ENCODE measurements at regions of chr18 and their contacts with region 1.

Region 1: DNA sequence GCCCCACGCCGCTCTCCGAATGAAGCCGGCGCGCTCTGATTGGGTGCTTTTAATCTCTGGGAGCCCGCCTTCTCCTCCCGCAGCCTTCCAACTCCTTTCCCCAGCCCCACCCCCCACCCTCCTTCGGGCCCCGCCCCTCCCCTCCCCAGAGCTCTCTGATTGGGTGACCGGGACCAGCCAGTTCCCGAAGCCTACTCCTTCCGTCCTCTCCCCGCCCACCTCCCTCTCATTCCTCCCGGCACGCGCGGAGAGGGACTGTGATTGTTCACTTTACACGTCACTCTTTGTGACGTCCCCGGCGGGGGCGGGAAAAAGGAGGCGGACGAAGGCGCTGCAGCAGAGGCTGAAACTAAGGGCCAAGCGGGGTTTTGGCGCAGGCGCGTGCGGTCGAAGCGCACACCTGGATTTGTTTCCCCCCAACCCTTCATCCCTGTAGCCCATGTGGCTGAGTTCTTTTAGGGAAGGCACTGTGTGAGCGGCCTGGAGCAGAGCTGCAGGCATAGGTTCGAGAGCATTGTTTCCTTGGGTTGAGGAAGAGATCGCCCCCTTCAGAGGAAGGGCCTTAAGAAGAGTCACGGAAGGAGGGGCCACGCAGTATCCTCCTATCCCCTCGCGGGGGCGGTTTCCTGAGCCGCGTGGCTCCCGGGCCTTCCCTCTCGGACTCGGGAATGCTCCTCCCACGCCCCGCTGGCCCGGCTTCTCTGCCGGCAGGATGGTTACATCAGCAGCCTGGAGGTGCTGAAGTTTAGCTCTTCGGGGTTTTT is at the start of gene MEX3C:
- DNase-seq: peak; percentile 100
- ATAC-seq: peak; percentile 81
- H3K4me3 ChIP-seq: peak within 1 kb of the TSS; percentile 65 to 94 (median 84)
- H3K4me3 Mint-ChIP-seq: peak within 1 kb of the TSS; percentile 97
- H3K27ac ChIP-seq: peak within 1 kb of the TSS; percentile 74 to 87
- H3K27ac Mint-ChIP-seq: peak within 1 kb of the TSS; percentile 98
- H3K4me1 ChIP-seq: peaks cover 25 to 27% of the 10 kb centered on the region in 2 donors
- H3K4me1 Mint-ChIP-seq: peaks cover 32% of the 10 kb centered on the region
- H3K27me3 ChIP-seq: no peaks in the 10 kb centered on the region
- H3K27me3 Mint-ChIP-seq: no peaks in the 10 kb centered on the region
- CTCF ChIP-seq: peak; percentile 23
- total RNA-seq, gene MEX3C: 92.4 and 93.9 TPM in 2 replicates

Region 2: DNA sequence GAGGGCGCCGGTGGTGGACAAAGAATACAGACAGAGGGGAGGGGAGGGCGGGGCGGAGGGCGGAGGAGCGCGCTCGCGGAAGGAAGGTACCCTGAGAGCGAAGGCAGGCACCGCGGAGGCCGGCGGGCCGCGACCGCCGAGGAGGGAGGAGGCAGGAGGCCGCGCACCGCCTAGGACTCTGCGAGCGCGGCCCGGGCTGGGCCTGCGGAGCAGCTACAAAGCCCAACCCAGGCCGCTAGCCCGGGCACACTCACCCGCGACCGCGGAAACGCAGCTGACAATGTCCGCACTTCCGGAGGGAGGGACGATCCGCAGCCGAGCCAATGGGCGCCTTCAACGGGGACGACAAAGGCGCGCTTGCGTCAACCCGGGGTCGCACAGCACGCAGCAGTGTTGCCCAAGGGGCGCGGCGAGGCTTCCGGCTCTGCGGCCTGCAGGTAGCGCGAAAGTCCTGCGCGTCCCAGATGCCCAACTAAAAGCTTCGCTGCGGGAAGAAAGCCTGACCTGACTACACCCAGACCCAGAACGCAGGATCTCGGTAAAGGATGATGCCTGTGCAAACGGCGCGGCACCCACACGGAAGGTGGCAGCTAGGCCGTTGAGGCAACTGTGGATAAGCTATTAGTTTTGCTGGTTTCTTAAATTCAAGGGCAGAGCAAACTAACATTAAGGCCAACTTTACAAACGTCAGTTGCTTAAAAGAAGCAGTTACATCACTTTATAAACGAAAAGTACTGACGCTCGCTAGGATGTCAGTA is 1710.7 kb before region 1 on chr18 and contains the start of gene C18orf32:
- CTCF ChIA-PET with region 1: no interaction called
- POLR2A ChIA-PET with region 1: no interaction called
- intact Hi-C with region 1: loop called (anchors 5 kb)
- DNase-seq: peak; percentile 96
- ATAC-seq: peak; percentile 93
- H3K4me3 ChIP-seq: peak within 1 kb of the TSS; percentile 74 to 97 (median 82)
- H3K4me3 Mint-ChIP-seq: peak within 1 kb of the TSS; percentile 98
- H3K27ac ChIP-seq: peak within 1 kb of the TSS; percentile 88 to 95
- H3K27ac Mint-ChIP-seq: peak within 1 kb of the TSS; percentile 97
- H3K4me1 ChIP-seq: peaks cover 39% of the 10 kb centered on the region in 2 donors
- H3K4me1 Mint-ChIP-seq: peaks cover 66% of the 10 kb centered on the region
- H3K27me3 ChIP-seq: no peaks in the 10 kb centered on the region
- H3K27me3 Mint-ChIP-seq: no peaks in the 10 kb centered on the region
- CTCF ChIP-seq: no peak
- total RNA-seq, gene C18orf32: 27.7 and 36.3 TPM in 2 replicates

Region 3: GRCh38 chr18:50287441-50288347 is 910.1 kb before region 1 on chr18 and contains the start of gene CXXC1:
- CTCF ChIA-PET with region 1: no interaction called
- POLR2A ChIA-PET with region 1: no interaction called
- intact Hi-C with region 1: loop called (anchors 5 kb)
- DNase-seq: peak; percentile 99
- ATAC-seq: peak; percentile 91
- H3K4me3 ChIP-seq: peak within 1 kb of the TSS; percentile 64 to 97 (median 90)
- H3K4me3 Mint-ChIP-seq: peak within 1 kb of the TSS; percentile 98
- H3K27ac ChIP-seq: peak within 1 kb of the TSS; percentile 93
- H3K27ac Mint-ChIP-seq: peak within 1 kb of the TSS; percentile 94
- H3K4me1 ChIP-seq: peaks cover 8 to 13% of the 10 kb centered on the region in 2 donors
- H3K4me1 Mint-ChIP-seq: peaks cover 34% of the 10 kb centered on the region
- H3K27me3 ChIP-seq: no peaks in the 10 kb centered on the region
- H3K27me3 Mint-ChIP-seq: no peaks in the 10 kb centered on the region
- CTCF ChIP-seq: peak; percentile 42
- total RNA-seq, gene CXXC1: 136 and 157 TPM in 2 replicates

Region 4: GRCh38 chr18:50334546-50335152 is 863.2 kb before region 1 on chr18:
- CTCF ChIA-PET with region 1: no interaction called
- POLR2A ChIA-PET with region 1: no interaction called
- intact Hi-C with region 1: no loop called
- DNase-seq: peak; percentile 82
- ATAC-seq: peak; percentile 98
- H3K4me3 ChIP-seq: peak overlapping the region in 3 of 5 experiments; percentile 19 to 57 (median 30)
- H3K4me3 Mint-ChIP-seq: peak overlapping the region; percentile 62
- H3K27ac ChIP-seq: no peak overlapping the region
- H3K27ac Mint-ChIP-seq: peak overlapping the region; percentile 71
- H3K4me1 ChIP-seq: peaks cover 67 to 72% of the 10 kb centered on the region in 2 donors
- H3K4me1 Mint-ChIP-seq: peaks cover 75% of the 10 kb centered on the region
- H3K27me3 ChIP-seq: peaks cover 0 to 5% (median 0%) of the 10 kb centered on the region in 4 experiments
- H3K27me3 Mint-ChIP-seq: peaks cover 3% of the 10 kb centered on the region
- CTCF ChIP-seq: no peak

Region 5: DNA sequence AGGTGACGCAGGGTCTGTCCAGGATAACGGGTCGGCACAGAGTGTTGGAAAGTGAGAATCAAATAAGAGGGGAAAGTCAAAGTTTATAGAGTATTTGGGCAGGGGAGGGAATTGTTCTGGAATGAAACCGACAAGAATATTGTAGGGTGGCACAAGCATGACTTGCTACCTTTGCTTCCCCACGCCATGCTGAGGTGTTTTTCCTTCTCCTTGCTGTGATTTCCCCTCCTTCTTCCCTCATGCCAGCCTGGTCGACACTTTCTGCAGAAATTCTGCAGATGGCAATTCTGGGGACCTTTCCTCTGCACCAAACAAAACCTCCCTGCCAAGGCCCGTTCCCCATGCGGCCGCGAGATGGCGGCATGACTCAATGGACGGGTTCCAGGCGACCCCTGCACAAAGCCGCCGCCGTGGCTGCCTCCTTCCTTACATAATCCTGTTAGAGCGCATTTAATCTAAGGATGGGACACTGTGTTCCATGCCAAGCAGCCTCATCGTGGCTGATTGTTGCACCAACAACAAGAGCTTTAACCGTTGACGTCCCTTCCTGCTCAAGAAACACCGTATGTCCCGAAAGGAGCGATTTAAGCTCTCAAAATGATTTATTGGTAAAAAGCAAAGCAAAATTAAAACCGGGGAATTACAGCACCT is 378.0 kb before region 1 on chr18 and contains the start of gene MRO:
- CTCF ChIA-PET with region 1: no interaction called
- POLR2A ChIA-PET with region 1: no interaction called
- intact Hi-C with region 1: loop called (anchors 2 kb)
- DNase-seq: peak; percentile 84
- ATAC-seq: peak; percentile 83
- H3K4me3 ChIP-seq: peak within 1 kb of the TSS; percentile 20 to 60 (median 53)
- H3K4me3 Mint-ChIP-seq: peak within 1 kb of the TSS; percentile 17
- H3K27ac ChIP-seq: no peak within 1 kb of the TSS
- H3K27ac Mint-ChIP-seq: no peak within 1 kb of the TSS
- H3K4me1 ChIP-seq: peaks cover 44 to 47% of the 10 kb centered on the region in 2 donors
- H3K4me1 Mint-ChIP-seq: peaks cover 22% of the 10 kb centered on the region
- H3K27me3 ChIP-seq: no peaks in the 10 kb centered on the region
- H3K27me3 Mint-ChIP-seq: no peaks in the 10 kb centered on the region
- CTCF ChIP-seq: peak; percentile 97
- total RNA-seq, gene MRO: not detected in 2 replicates

Region 6: GRCh38 chr18:50967714-50968661 is 229.9 kb before region 1 on chr18 and contains the start of gene ELAC1:
- CTCF ChIA-PET with region 1: no interaction called
- POLR2A ChIA-PET with region 1: interaction called, 6 read pairs
- intact Hi-C with region 1: loop called (anchors 5 kb)
- DNase-seq: peak; percentile 86
- ATAC-seq: peak; percentile 95
- H3K4me3 ChIP-seq: peak within 1 kb of the TSS; percentile 65 to 90 (median 82)
- H3K4me3 Mint-ChIP-seq: peak within 1 kb of the TSS; percentile 93
- H3K27ac ChIP-seq: peak within 1 kb of the TSS; percentile 80 to 95
- H3K27ac Mint-ChIP-seq: peak within 1 kb of the TSS; percentile 92
- H3K4me1 ChIP-seq: peaks cover 9 to 14% of the 10 kb centered on the region in 2 donors
- H3K4me1 Mint-ChIP-seq: peaks cover 20% of the 10 kb centered on the region
- H3K27me3 ChIP-seq: no peaks in the 10 kb centered on the region
- H3K27me3 Mint-ChIP-seq: no peaks in the 10 kb centered on the region
- CTCF ChIP-seq: no peak
- total RNA-seq, gene ELAC1: 9.9 and 10.0 TPM in 2 replicates

Region 7: DNA sequence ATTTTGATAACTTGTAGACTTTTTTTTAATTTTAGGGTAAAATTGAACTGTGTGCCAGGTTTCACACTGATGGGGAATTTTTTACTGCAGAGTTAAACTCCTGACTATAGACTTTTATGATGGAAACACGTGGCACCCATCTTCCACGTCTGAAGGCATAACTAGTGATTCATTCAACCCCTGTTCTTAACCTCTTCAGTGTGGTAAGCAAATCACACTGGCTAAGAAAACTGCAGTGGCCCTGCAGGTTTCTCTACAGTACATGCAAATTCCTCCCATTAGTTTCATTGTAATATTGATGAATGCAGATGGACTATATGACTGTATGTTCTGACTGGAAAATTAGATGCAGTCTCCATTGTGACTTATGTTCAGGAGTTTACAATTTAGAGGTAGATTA is 120.6 kb before region 1 on chr18:
- CTCF ChIA-PET with region 1: no interaction called
- POLR2A ChIA-PET with region 1: no interaction called
- intact Hi-C with region 1: loop called (anchors 10 kb)
- DNase-seq: no peak
- ATAC-seq: no peak
- H3K4me3 ChIP-seq: no peak overlapping the region
- H3K4me3 Mint-ChIP-seq: no peak overlapping the region
- H3K27ac ChIP-seq: no peak overlapping the region
- H3K27ac Mint-ChIP-seq: no peak overlapping the region
- H3K4me1 ChIP-seq: peaks cover 17% of the 10 kb centered on the region in 2 donors
- H3K4me1 Mint-ChIP-seq: peaks cover 28% of the 10 kb centered on the region
- H3K27me3 ChIP-seq: no peaks in the 10 kb centered on the region
- H3K27me3 Mint-ChIP-seq: no peaks in the 10 kb centered on the region
- CTCF ChIP-seq: no peak

Region 8: DNA sequence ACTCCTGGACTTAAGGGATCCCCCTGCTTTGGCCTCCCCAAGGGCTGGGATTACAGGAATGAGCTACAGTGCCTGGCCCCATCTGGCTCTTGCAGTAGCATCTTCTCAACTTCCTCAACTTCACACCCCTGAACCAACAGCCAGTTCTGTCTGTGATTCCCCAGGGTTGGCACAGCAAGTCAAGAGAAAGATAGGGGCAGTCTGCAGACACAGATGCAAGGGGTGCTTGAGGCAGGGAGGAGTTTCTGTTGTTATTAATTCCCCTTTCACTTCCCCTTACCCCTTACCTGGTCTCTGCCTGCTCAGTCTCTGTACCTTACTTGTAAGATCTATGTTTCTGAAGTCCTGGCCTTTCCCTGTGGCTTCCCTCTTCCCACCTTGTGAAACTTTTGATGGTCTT is 53.8 kb after region 1 on chr18:
- CTCF ChIA-PET with region 1: interaction called, 4 read pairs
- POLR2A ChIA-PET with region 1: interaction called, 4 read pairs
- intact Hi-C with region 1: loop called (anchors 1 kb)
- DNase-seq: peak; percentile 89
- ATAC-seq: peak; percentile 99
- H3K4me3 ChIP-seq: no peak overlapping the region
- H3K4me3 Mint-ChIP-seq: no peak overlapping the region
- H3K27ac ChIP-seq: peak overlapping the region in 1 of 2 donors; percentile 27
- H3K27ac Mint-ChIP-seq: peak overlapping the region; percentile 86
- H3K4me1 ChIP-seq: peaks cover 14 to 19% of the 10 kb centered on the region in 2 donors
- H3K4me1 Mint-ChIP-seq: peaks cover 21% of the 10 kb centered on the region
- H3K27me3 ChIP-seq: no peaks in the 10 kb centered on the region
- H3K27me3 Mint-ChIP-seq: peaks cover 3% of the 10 kb centered on the region
- CTCF ChIP-seq: no peak